ENCODE measurements at regions of chr19 and their contacts with region 1.

Region 1: DNA sequence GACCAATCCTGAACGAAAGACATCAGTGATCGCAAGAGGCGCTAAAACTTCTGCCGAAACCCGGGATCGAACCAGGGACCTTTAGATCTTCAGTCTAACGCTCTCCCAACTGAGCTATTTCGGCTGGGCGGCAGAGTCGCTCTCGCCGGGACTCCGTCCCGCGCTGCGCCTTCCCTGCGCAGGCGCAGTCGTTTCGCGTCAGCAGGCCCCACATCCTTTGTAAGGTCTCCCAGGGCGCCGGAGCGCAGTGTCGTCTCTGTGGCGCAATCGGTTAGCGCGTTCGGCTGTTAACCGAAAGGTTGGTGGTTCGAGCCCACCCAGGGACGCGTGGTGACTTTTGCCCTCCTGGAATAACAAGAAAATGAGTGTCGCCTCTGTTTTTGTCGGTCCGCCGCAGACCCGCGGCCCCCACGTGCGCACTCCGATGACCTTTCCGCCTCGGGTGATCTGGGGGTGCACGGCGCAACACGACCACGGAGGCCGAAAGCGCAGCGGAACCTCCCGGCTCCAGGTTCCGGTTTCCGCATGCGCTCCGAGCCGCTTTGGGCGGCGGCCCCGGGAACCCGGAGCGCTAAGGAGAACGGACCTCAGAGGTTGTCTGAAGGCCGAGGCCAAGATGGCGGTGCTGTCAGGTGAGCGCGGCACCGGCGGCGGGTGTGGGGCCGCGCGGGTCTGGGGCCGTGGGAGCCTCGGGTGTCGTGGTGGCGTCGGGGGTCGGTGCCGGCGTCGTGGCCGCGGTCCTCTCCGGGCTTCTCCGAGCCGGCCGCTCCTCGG is at the start of gene NDUFS7:
- DNase-seq: peak; percentile 47 to 93
- H3K4me3 ChIP-seq: peak within 1 kb of the TSS; percentile 81
- H3K27ac ChIP-seq: peak within 1 kb of the TSS; percentile 76 to 78
- H3K4me1 ChIP-seq: peaks cover 8 to 10% of the 10 kb centered on the region in 2 donors
- H3K27me3 ChIP-seq: no peaks in the 10 kb centered on the region
- CTCF ChIP-seq: peak in 2 of 3 experiments; percentile 13 to 54
- total RNA-seq, gene NDUFS7: 216 TPM

Region 2: DNA sequence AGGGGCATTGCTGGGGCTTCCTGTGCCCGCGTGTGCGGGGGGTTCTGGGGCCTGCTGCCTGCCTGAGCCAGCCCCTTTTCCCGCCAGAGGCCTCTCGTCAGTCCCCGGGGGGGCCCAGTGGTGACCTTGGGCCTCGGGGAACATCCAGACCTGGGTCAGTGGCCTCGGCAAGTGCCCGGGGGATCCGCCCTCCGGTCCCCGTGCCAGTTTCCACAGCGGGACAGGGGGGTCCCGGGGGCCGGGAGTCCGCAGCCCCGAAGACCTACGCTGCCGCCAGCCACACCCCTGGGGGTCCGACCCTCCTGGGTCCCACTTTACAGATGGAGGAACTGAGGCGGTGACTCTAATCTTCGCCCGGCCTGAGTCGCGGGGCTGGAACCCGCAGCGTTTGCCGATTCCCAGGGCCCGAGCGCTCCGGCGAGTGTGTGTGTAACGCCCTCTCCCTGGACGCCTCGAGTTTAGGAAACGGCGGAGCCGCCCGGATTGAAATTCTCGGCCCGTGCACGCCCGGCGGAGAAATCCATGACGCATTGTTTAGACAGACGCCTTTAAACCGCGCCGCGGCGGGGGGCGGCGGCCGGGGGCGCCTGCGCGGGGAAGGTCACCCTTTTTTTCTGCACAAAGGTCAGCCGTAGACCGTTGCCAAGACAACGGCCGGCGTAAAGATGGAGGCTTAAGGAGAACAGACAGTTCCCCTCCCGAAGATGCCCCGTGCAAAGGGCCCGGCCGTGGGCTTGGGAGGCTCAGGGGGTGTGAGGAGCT is 58.5 kb before region 1 on chr19:
- intact Hi-C with region 1: no loop called
- DNase-seq: peak in 1 of 2 donors; percentile 75
- H3K4me3 ChIP-seq: peak overlapping the region; percentile 36 to 64
- H3K27ac ChIP-seq: no peak overlapping the region
- H3K4me1 ChIP-seq: peaks cover 0 to 6% of the 10 kb centered on the region in 2 donors
- H3K27me3 ChIP-seq: peaks cover 11% of the 10 kb centered on the region
- CTCF ChIP-seq: no peak

Region 3: DNA sequence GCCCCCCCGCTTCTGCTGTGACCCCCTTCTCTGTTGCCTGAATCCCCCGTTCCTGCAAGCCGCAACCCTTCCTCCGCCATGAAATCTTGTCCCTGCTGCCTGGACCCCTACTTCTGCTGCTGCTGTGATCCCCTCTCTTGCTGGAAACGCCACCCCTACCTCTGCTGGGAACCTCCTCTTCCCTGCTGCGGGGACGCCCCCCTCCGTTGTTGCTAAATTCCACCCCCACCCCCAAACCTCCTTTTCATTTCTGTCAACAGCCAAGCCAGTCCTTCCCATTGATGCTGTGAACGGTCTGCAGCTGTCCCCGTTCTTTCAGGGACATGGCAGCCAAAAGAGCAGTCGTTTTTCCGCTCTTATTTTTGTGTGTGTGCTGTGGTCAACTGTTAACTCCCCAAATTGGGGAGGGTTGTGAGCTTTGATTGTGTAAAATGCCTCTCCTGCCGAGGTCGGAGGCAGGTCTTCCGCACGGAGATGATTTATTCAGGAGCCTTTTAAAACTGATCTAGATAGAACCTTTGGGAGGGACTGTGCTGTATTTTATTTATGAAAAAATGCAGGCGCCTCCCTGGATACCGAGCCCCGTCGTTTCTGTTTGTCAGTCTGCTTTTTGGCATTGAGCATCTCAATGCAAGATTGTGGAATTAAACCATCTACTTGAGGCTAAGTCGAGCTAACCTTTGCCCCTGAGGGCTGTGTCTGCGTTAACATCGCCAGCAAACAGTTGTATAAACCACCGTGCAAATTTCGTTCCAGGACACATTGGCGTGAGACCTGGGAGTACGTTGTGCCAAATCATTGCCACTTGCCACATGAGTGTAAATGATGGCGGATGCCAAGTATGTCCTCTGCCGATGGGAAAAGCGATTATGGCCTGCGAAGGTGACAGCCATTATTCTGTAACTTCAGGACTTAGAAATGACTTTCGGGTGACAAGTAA is 27.7 kb before region 1 on chr19:
- intact Hi-C with region 1: loop called (anchors 1 kb)
- DNase-seq: no peak
- H3K4me3 ChIP-seq: peak overlapping the region; percentile 85 to 98
- H3K27ac ChIP-seq: peak overlapping the region; percentile 88 to 90
- H3K4me1 ChIP-seq: peaks cover 3 to 25% of the 10 kb centered on the region in 2 donors
- H3K27me3 ChIP-seq: no peaks in the 10 kb centered on the region
- CTCF ChIP-seq: no peak

Region 4: GRCh38 chr19:1406774-1407499 is 23.4 kb after region 1 on chr19:
- intact Hi-C with region 1: loop called (anchors 1 kb)
- DNase-seq: peak; percentile 95 to 99
- H3K4me3 ChIP-seq: peak overlapping the region; percentile 41 to 75
- H3K27ac ChIP-seq: peak overlapping the region; percentile 55 to 61
- H3K4me1 ChIP-seq: peaks cover 31 to 37% of the 10 kb centered on the region in 2 donors
- H3K27me3 ChIP-seq: no peaks in the 10 kb centered on the region
- CTCF ChIP-seq: peak in 1 of 3 experiments; percentile 17

Region 5: GRCh38 chr19:1478934-1479707 is 95.6 kb after region 1 on chr19 and contains the start of gene C19orf25:
- intact Hi-C with region 1: loop called (anchors 1 kb)
- DNase-seq: peak; percentile 73 to 96
- H3K4me3 ChIP-seq: peak within 1 kb of the TSS; percentile 88 to 90
- H3K27ac ChIP-seq: peak within 1 kb of the TSS; percentile 41 to 62
- H3K4me1 ChIP-seq: peaks cover 2 to 14% of the 10 kb centered on the region in 2 donors
- H3K27me3 ChIP-seq: no peaks in the 10 kb centered on the region
- CTCF ChIP-seq: no peak
- total RNA-seq, gene C19orf25: 32.7 TPM

Region 6: DNA sequence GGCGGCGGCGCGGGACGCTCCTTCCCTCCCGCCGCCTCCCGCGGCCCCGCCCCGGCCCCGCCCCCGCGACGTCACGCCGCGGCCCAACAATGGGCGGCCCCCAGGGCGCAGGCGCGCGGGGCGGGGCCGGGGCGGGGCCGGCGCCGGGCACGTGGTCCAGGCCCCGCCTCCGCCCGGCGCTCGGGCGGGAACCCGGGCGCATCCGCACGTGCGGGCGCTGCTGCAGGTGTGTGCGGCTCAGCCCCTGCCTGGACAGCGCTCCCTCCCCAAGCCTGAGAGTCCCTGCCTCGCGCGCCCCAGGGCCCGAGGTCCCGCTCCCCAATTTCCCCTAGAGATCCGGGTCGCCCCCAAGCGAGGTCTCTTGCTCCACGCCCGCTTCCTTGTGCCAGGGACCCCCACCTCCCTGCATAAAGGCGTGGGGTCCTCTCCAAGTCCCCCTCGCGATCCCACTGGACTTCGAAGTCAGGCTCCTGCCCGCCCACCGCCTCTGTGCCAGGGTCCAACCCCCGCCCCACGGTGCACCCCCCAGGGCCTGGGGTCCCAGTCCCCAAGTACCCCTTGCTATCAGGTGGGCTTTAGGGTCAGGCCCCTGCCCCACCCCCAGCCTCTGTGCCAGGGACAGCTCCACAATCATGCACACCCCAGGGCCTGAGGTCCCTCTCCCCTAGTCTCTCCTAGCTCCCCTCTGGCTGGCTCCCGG is 185.0 kb after region 1 on chr19 and contains the start of gene MEX3D:
- intact Hi-C with region 1: no loop called
- DNase-seq: peak in 1 of 2 donors; percentile 85
- H3K4me3 ChIP-seq: peak within 1 kb of the TSS; percentile 57 to 94
- H3K27ac ChIP-seq: peak within 1 kb of the TSS; percentile 72 to 84
- H3K4me1 ChIP-seq: peaks cover 4 to 9% of the 10 kb centered on the region in 2 donors
- H3K27me3 ChIP-seq: no peaks in the 10 kb centered on the region
- CTCF ChIP-seq: no peak
- total RNA-seq, gene MEX3D: 83.7 TPM